PC-9 (cell line): ENCODE measurements at regions of chr19 and their contacts with region 1.

Region 1: DNA sequence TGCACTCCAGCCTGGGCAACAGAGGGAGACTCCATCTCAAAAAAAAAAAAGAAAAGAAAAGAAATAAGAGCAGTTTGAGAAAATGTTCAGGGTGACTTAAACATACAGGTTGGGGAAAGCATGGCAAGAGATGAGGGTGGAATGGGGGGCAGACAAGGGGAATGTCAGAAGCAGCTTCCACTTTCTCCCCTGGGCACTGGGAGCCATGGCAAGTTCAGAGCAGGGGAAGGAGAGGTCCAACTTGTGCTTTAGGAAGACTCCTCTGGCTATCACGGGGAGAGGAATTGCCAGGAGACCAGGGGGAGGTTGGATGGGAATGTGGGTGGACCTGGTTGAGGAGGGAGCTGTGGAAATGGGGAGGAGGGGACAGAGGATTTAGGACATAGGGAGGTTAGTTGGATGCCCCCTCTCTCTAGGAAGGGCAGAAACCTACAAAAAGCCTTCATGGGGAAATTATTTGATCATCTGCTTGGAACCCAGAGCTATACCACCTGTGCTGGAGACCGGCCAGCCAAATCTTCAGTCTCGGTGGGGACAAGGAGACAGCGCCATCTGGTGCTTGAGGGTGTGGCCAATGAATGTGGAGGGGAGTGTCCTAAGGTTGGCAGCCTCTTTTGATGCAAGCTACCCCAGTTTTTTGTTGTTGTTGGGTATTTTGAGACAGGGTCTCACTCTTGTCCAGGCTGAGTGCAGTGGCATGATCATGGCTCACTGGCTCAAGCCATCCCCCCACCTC is 7.3 kb upstream of the STRN4 start:
- DNase-seq: peak in 1 of 2 experiments; percentile 48
- H3K4me3 ChIP-seq: no peak overlapping the region
- H3K27ac ChIP-seq: no peak overlapping the region
- H3K4me1 ChIP-seq: no peaks in the 10 kb centered on the region
- H3K27me3 ChIP-seq: no peaks in the 10 kb centered on the region
- CTCF ChIP-seq: peak; percentile 61

Region 2: DNA sequence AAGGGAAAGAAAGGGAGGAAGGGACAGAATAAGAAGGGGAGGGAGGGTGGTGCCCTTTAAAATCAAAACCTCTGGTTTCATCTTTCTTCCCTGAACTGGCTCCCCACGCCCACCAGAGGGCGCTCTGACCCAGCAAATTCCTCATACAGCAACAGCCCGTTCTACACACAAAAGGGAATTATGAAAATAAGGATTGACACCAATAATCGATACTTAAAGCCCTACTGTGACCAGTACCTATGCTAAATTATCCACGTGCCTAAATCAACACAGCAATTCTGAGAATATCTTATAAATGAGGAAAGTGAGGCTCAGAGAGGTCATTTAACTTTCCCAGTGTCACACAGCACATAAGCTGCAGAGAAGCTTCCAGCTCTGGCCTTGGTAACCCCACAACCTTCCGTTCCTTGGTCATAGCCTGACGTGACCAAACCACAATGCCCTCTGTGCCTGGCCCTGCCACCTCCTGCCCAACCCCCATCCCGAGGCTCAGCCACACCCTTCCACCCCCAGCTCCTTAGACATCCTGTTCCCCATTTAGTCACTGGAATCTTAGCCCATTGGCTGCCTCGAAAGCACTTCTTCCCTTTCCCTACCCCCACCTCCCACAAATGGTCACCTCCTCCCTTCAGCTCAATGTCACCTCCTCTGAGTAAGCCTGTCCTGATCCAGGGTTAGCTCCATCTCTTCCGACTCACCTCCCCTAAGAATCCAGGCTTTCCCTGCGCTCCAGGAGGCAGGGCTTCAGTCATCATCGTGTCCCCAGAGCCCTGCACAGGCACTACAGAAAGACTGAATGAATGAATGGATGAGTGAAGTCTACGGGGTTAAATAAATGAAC is 223.7 kb before region 1 on chr19:
- CTCF ChIA-PET with region 1: no interaction called
- POLR2A ChIA-PET with region 1: no interaction called
- intact Hi-C with region 1: loop called (anchors 5 kb)
- DNase-seq: peak; percentile 42 to 64
- H3K4me3 ChIP-seq: no peak overlapping the region
- H3K27ac ChIP-seq: no peak overlapping the region
- H3K4me1 ChIP-seq: peaks cover 8% of the 10 kb centered on the region; the same call in 1 of the 2 replicates
- H3K27me3 ChIP-seq: 0 out of 2 replicates have a peak, but pooled peaks cover 4% of the 10 kb centered on the region
- CTCF ChIP-seq: peak; percentile 98

Region 3: DNA sequence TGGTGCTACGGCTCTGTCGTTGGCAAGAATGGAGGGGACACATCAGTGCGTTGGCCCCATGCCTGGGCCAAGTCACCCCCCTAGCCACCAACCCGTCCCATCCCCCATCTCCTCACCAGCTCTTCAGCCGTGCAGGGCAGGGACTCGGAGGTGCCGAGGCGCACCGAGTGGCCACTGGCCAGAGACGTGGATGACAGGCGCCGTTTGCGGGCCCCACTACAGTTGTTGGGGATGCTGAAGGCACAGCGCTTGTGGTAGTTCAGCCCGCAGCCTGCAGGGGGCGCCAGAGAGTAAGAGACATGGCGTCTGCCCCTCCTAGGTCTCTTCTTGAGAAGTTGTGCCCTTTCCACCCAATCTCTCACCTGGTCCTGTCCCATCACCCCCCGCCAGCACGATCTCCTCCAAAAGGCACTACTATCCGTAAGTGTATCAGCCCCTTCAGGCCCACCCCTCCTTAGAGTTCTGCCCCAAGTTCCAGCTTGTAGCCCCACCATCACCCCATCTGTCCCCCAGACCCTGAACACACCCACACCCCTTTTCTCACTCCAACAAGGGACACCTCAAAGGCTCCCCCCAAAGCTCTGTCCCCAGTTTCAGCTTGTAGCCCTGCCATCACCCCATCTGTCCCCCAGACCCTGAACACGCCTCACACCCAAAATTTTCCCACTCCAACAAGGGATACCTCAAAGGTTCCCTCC is 49.1 kb before region 1 on chr19:
- CTCF ChIA-PET with region 1: no interaction called
- POLR2A ChIA-PET with region 1: no interaction called
- intact Hi-C with region 1: loop called (anchors 2 kb)
- DNase-seq: peak; percentile 34 to 70
- H3K4me3 ChIP-seq: no peak overlapping the region
- H3K27ac ChIP-seq: no peak overlapping the region
- H3K4me1 ChIP-seq: no peaks in the 10 kb centered on the region
- H3K27me3 ChIP-seq: no peaks in the 10 kb centered on the region
- CTCF ChIP-seq: peak; percentile 98

Region 4: GRCh38 chr19:46840136-46840942 is 86.8 kb after region 1 on chr19:
- CTCF ChIA-PET with region 1: interaction called, 11 read pairs
- POLR2A ChIA-PET with region 1: interaction called, 3 read pairs
- intact Hi-C with region 1: loop called (anchors 1 kb)
- DNase-seq: peak; percentile 48 to 64
- H3K4me3 ChIP-seq: no peak overlapping the region
- H3K27ac ChIP-seq: peak overlapping the region; percentile 44
- H3K4me1 ChIP-seq: peaks cover 19% of the 10 kb centered on the region
- H3K27me3 ChIP-seq: no peaks in the 10 kb centered on the region
- CTCF ChIP-seq: peak; percentile 98

Region 5: GRCh38 chr19:46990991-46991676 is 237.5 kb after region 1 on chr19:
- CTCF ChIA-PET with region 1: interaction called, 4 read pairs
- POLR2A ChIA-PET with region 1: no interaction called
- intact Hi-C with region 1: loop called (anchors 10 kb)
- DNase-seq: peak; percentile 61 to 74
- H3K4me3 ChIP-seq: no peak overlapping the region
- H3K27ac ChIP-seq: no peak overlapping the region
- H3K4me1 ChIP-seq: no peaks in the 10 kb centered on the region
- H3K27me3 ChIP-seq: no peaks in the 10 kb centered on the region
- CTCF ChIP-seq: peak; percentile 93

Region 6: DNA sequence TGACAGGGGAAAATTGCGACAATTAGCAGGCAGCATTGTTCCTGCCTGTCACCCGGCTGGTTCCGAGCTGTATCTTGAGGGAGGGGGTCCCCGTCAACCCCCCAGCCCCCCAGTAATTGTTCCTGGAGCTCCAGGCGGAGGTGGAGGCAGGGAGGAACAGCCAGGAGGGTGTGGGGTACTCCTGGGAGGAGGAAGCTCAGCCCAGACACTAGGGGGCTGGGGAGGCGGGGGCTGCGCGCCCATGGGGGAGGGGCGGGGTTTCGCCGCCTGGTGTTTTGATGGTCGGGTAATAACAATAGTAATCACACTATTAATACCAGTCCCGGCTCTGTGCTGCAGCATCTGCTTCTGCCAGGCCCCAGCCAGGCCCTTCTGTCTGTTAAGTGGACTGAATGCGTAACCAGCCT is 274.6 kb after region 1 on chr19:
- CTCF ChIA-PET with region 1: interaction called, 10 read pairs
- POLR2A ChIA-PET with region 1: no interaction called
- intact Hi-C with region 1: loop called (anchors 10 kb)
- DNase-seq: no peak
- H3K4me3 ChIP-seq: no peak overlapping the region
- H3K27ac ChIP-seq: no peak overlapping the region
- H3K4me1 ChIP-seq: no peaks in the 10 kb centered on the region
- H3K27me3 ChIP-seq: peaks cover 45% of the 10 kb centered on the region
- CTCF ChIP-seq: no peak

Region 7: DNA sequence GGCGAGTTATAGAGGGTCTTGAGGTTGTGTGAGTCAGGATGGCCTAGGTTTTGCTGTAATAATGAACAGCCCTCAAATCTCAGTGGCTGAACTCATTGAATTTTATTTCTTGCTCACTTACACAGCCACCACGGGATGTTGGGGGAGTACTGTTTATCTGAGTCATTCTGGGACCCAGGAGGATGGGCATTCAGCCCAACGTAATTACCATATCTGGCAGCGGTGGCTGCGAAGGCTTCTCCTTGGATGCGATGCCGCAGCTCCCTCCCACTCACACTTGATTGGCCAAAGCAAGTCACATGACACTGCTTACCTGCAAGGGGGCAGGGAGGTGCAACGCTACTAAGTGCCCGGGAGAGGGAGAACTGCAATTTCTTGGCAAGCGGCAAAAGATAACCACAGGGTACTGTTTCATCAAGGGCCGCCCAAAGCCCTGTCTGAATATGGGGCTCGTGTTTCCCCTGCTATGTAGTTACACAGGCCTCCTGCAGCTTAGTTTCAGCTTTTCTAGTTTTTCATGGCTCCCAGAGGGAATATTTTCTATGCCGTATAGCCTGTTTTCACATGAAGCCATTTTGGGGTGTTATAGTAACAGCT is 1436.8 kb after region 1 on chr19:
- CTCF ChIA-PET with region 1: no interaction called
- POLR2A ChIA-PET with region 1: no interaction called
- intact Hi-C with region 1: no loop called
- DNase-seq: no peak
- H3K4me3 ChIP-seq: no peak overlapping the region
- H3K27ac ChIP-seq: no peak overlapping the region
- H3K4me1 ChIP-seq: no peaks in the 10 kb centered on the region
- H3K27me3 ChIP-seq: no peaks in the 10 kb centered on the region
- CTCF ChIP-seq: 0 out of 2 replicates have a peak, but pooled peaks have one; percentile 17